CD4-positive, alpha-beta memory T cell (primary cell): ENCODE measurements at regions of chrX and their contacts with region 1.

Region 1: DNA sequence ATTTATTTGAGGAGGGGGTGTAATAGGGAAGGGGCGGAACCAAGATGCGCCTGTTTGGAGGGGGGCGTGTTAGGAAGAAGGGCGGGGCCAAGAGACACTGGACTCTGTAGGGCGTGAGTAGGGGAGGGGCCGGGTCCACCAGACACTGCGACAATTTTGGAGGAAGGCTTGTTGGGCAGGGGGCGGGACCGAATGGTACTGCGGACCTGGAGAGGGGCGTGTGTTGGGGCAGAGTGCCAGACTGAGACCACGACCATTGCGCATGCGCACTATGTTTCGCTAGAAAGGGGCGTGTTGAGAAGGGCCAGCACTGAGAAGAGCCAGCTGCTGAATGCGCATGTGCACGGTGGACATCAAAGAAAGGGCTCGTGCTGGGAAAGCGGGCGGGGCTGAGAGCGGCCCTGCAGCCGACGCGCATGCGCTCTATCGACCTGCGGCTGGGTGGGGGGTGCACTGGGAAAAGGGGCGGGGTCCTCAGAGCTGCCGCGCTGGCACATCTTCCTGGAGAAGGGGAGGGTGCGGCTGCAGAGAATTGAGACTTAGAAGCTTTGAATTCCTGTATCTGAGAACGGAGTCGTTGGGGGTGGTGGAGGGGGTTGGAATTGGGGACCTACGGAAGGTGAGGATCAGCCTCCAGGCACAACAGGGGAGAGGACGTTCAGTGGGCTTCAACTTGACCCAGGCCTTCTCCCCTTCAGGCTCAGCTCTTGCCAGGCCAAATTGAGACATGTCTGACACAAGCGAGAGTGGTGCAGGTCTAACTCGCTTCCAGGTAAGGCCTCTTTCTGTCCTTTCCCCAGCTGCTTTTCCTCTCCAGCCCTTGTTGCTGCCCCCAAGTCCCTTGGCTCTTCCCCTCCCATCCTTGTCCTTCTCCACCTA is 1.3 kb downstream of the MAGED2 start:
- DNase-seq: peak; percentile 85 to 92 (median 90)
- H3K4me3 ChIP-seq: peak overlapping the region; percentile 65 to 86
- H3K4me3 Mint-ChIP-seq: peak overlapping the region; percentile 87 to 96 (median 95)
- H3K27ac ChIP-seq: peak overlapping the region; percentile 80
- H3K27ac Mint-ChIP-seq: peak overlapping the region; percentile 96 to 99 (median 98)
- H3K4me1 ChIP-seq: peaks cover 15% of the 10 kb centered on the region
- H3K4me1 Mint-ChIP-seq: peaks cover 10 to 28% (median 12%) of the 10 kb centered on the region in 4 donors
- H3K27me3 ChIP-seq: no peaks in the 10 kb centered on the region
- H3K27me3 Mint-ChIP-seq: no peaks in the 10 kb centered on the region

Region 2: GRCh38 chrX:53224860-53225797 is 1583.7 kb before region 1 on chrX and contains the start of gene KDM5C:
- CTCF ChIA-PET with region 1: no interaction called
- POLR2A ChIA-PET with region 1: no interaction called
- intact Hi-C with region 1: loop called (anchors 10 kb)
- DNase-seq: peak; percentile 90 to 96 (median 96)
- H3K4me3 ChIP-seq: peak within 1 kb of the TSS; percentile 65 to 88
- H3K4me3 Mint-ChIP-seq: peak within 1 kb of the TSS; percentile 97 to 100 (median 99)
- H3K27ac ChIP-seq: peak within 1 kb of the TSS; percentile 97
- H3K27ac Mint-ChIP-seq: peak within 1 kb of the TSS; percentile 98 to 100 (median 99)
- H3K4me1 ChIP-seq: peaks cover 35% of the 10 kb centered on the region
- H3K4me1 Mint-ChIP-seq: peaks cover 24 to 52% (median 39%) of the 10 kb centered on the region in 4 donors
- H3K27me3 ChIP-seq: no peaks in the 10 kb centered on the region
- H3K27me3 Mint-ChIP-seq: peaks cover 0 to 2% of the 10 kb centered on the region in 2 donors
- total RNA-seq, gene KDM5C: 120 to 127 TPM

Region 3: GRCh38 chrX:54044126-54044876 is 764.5 kb before region 1 on chrX and contains the start of gene PHF8:
- CTCF ChIA-PET with region 1: no interaction called
- POLR2A ChIA-PET with region 1: interaction called, 9 read pairs
- intact Hi-C with region 1: loop called (anchors 2 kb)
- DNase-seq: peak; percentile 91 to 96 (median 96)
- H3K4me3 ChIP-seq: peak within 1 kb of the TSS; percentile 34 to 69
- H3K4me3 Mint-ChIP-seq: peak within 1 kb of the TSS; percentile 91 to 97 (median 94)
- H3K27ac ChIP-seq: peak within 1 kb of the TSS; percentile 90
- H3K27ac Mint-ChIP-seq: peak within 1 kb of the TSS; percentile 96 to 99 (median 97)
- H3K4me1 ChIP-seq: peaks cover 9% of the 10 kb centered on the region
- H3K4me1 Mint-ChIP-seq: peaks cover 10 to 41% (median 15%) of the 10 kb centered on the region in 4 donors
- H3K27me3 ChIP-seq: no peaks in the 10 kb centered on the region
- H3K27me3 Mint-ChIP-seq: no peaks in the 10 kb centered on the region
- total RNA-seq, gene PHF8: 65.1 to 67.2 TPM

Region 4: GRCh38 chrX:54439967-54440871 is 368.6 kb before region 1 on chrX and contains the start of gene TSR2:
- CTCF ChIA-PET with region 1: no interaction called
- POLR2A ChIA-PET with region 1: interaction called, 3 read pairs
- intact Hi-C with region 1: loop called (anchors 10 kb)
- DNase-seq: peak; percentile 76 to 88 (median 80)
- H3K4me3 ChIP-seq: peak within 1 kb of the TSS; percentile 69 to 81
- H3K4me3 Mint-ChIP-seq: peak within 1 kb of the TSS; percentile 86 to 97 (median 93)
- H3K27ac ChIP-seq: peak within 1 kb of the TSS; percentile 75
- H3K27ac Mint-ChIP-seq: peak within 1 kb of the TSS; percentile 84 to 92 (median 90)
- H3K4me1 ChIP-seq: peaks cover 26% of the 10 kb centered on the region
- H3K4me1 Mint-ChIP-seq: peaks cover 15 to 35% (median 25%) of the 10 kb centered on the region in 4 donors
- H3K27me3 ChIP-seq: no peaks in the 10 kb centered on the region
- H3K27me3 Mint-ChIP-seq: no peaks in the 10 kb centered on the region
- total RNA-seq, gene TSR2: 39.2 to 42.1 TPM

Region 5: DNA sequence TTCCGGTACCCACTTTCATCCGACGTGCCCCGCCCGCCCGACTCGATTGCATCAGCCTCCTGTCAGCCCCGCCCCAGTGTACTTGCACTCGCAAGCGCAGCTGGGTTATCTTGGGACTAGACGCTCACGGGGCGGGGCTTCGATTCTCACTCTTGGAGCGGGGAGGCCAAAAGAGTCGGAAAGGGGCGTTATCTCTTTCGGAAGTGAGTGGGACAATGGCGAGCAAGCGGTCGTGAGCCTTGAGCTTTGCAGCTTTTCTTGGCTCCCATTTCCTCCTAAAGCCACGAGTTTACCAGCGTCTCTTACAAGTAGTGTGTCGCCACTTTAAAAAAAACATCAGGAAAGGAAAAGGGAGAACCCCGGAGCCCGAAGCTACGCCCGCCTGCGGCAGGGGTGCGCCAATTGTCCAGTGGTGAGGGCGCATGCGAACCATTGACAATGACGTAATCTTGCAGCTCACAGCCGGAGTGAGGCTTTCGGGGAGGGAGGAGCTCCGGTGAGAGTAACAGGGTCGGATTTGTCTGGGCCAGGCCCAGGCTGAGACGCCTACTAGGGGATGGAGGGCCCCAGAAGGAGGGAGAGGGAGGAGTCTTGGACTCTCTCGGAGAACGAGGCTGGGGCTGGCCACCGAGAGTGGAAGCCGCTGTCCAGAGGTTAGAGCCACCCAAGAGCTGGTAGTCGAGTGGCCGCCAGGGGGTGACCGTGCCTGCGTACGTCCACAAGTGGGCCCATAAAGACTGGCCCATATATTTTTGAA is 169.3 kb before region 1 on chrX:
- CTCF ChIA-PET with region 1: interaction called, 5 read pairs
- POLR2A ChIA-PET with region 1: interaction called, 38 read pairs
- intact Hi-C with region 1: loop called (anchors 1 kb)
- DNase-seq: peak; percentile 86 to 97 (median 91)
- H3K4me3 ChIP-seq: peak overlapping the region; percentile 57 to 59
- H3K4me3 Mint-ChIP-seq: peak overlapping the region; percentile 89 to 96 (median 94)
- H3K27ac ChIP-seq: peak overlapping the region; percentile 94
- H3K27ac Mint-ChIP-seq: peak overlapping the region; percentile 98 to 100 (median 99)
- H3K4me1 ChIP-seq: peaks cover 12% of the 10 kb centered on the region
- H3K4me1 Mint-ChIP-seq: peaks cover 2 to 23% (median 9%) of the 10 kb centered on the region in 4 donors
- H3K27me3 ChIP-seq: no peaks in the 10 kb centered on the region
- H3K27me3 Mint-ChIP-seq: no peaks in the 10 kb centered on the region

Region 6: DNA sequence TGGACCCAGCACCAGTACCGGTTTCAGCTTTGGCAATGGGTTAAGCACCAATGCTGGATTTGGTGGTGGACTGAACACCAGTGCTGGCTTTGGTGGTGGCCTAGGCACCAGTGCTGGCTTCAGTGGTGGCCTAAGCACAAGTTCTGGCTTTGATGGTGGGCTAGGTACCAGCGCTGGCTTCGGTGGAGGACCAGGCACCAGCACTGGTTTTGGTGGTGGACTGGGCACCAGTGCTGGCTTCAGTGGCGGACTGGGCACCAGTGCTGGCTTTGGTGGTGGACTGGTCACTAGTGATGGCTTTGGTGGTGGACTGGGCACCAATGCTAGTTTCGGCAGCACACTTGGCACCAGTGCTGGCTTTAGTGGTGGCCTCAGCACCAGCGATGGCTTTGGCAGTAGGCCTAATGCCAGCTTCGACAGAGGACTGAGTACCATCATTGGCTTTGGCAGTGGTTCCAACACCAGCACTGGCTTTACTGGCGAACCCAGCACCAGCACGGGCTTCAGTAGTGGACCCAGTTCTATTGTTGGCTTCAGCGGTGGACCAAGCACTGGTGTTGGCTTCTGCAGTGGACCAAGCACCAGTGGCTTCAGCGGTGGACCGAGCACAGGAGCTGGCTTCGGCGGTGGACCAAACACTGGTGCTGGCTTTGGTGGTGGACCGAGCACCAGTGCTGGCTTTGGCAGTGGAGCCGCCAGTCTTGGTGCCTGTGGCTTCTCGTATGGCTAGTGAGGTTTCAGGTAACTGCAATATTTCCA is 121.6 kb after region 1 on chrX:
- CTCF ChIA-PET with region 1: no interaction called
- POLR2A ChIA-PET with region 1: no interaction called
- intact Hi-C with region 1: no loop called
- DNase-seq: no peak
- H3K4me3 ChIP-seq: no peak overlapping the region
- H3K4me3 Mint-ChIP-seq: no peak overlapping the region
- H3K27ac ChIP-seq: no peak overlapping the region
- H3K27ac Mint-ChIP-seq: no peak overlapping the region
- H3K4me1 ChIP-seq: no peaks in the 10 kb centered on the region
- H3K4me1 Mint-ChIP-seq: no peaks in the 10 kb centered on the region
- H3K27me3 ChIP-seq: no peaks in the 10 kb centered on the region
- H3K27me3 Mint-ChIP-seq: no peaks in the 10 kb centered on the region

Region 7: DNA sequence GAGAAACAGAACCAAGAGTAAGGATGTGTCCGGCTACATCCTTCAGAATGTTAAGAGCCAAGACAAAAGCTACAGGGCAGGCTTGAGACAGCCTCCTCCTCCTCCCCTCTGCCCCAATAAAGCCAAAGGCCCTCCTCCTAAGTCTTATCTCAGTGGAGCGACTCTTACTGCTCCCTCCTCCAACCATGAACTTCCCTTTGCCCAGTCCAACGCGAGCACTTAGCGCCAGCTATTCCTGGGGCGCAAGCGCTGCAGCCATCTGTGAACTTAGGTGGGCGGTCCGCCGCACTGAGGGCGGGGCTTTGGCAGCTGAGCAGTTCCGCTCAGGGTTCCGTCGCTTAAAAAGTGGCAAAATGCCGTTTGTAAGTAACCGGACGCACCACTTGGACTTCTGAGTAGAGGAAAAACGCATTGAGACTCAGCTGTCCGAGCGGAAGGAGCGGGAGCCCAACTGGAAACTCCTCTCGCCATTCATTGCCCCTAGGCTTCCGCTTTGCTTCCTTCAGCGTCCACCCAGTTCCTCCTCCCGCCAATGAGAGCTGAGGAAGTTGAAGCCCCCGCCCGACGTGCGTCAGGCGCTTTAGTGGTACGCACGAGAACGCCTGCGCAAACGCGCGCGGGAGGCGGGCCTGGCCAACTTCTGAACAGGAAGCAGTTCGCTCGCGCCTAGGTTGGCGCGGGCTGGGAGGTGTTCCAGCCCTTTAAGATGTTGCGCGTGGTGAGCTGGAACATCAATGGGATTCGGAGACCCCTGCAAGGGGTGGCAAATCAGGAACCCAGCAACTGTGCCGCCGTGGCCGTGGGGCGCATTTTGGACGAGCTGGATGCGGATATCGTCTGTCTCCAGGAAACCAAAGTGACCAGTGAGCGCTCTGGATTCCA is 191.1 kb after region 1 on chrX and contains the start of gene APEX2:
- CTCF ChIA-PET with region 1: no interaction called
- POLR2A ChIA-PET with region 1: interaction called, 6 read pairs
- intact Hi-C with region 1: loop called (anchors 1 kb)
- DNase-seq: peak; percentile 83 to 91 (median 86)
- H3K4me3 ChIP-seq: peak within 1 kb of the TSS; percentile 63 to 84
- H3K4me3 Mint-ChIP-seq: peak within 1 kb of the TSS; percentile 94 to 97 (median 96)
- H3K27ac ChIP-seq: peak within 1 kb of the TSS; percentile 91
- H3K27ac Mint-ChIP-seq: peak within 1 kb of the TSS; percentile 92 to 99 (median 97)
- H3K4me1 ChIP-seq: peaks cover 17% of the 10 kb centered on the region
- H3K4me1 Mint-ChIP-seq: peaks cover 8 to 29% (median 15%) of the 10 kb centered on the region in 4 donors
- H3K27me3 ChIP-seq: no peaks in the 10 kb centered on the region
- H3K27me3 Mint-ChIP-seq: no peaks in the 10 kb centered on the region
- total RNA-seq, gene APEX2: 13.4 TPM

Region 8: DNA sequence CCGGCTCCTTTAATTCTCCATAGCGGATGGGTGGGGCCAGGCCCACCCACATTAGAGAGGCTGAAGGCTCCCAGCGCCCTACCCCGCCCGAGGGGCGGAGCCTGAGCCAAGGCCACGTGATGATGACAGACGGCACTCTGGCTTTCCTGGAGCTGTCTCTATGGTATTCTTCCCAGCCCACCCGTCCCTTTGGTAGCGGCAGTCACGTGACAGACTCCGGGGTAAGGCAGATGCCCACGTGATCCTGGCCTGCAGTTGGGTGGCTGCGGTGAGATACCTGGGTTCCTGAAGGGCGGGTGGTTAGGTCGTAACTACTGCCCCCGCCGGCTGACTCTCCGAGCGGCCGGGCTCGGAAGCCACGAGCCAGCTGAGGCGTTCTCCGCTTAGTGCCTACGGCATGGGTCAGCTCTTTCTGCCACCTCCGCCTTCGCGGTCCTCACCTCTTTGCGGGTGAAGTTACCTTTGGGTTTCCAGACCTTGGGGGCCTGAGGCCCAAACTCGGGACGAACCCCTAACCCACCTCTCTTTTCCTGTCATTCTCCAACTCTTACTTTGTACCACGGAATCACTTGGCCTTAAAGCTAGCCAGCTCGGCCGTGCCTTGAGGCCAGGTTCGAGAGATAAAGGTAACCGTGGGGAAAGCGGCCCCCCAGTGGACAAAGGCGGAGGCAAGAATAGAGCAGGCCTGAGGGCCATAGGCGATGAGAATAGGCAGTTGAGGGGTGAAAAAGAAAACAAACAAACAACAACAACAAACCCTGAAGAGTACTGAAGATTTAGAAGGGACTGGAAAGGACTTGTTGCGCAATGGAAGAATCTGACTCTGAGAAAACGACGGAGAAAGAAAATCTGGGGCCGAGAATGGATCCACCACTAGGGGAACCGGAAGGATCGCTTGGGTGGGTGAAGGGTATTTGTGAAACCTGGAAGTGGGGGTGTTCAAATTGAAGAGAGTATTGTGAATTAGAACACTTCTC is 909.0 kb after region 1 on chrX and contains the start of gene RRAGB:
- CTCF ChIA-PET with region 1: no interaction called
- POLR2A ChIA-PET with region 1: no interaction called
- intact Hi-C with region 1: loop called (anchors 5 kb)
- DNase-seq: peak; percentile 86 to 95 (median 90)
- H3K4me3 ChIP-seq: peak within 1 kb of the TSS; percentile 61 to 76
- H3K4me3 Mint-ChIP-seq: peak within 1 kb of the TSS; percentile 72 to 92 (median 86)
- H3K27ac ChIP-seq: peak within 1 kb of the TSS; percentile 80
- H3K27ac Mint-ChIP-seq: peak within 1 kb of the TSS; percentile 65 to 98 (median 94)
- H3K4me1 ChIP-seq: peaks cover 32% of the 10 kb centered on the region
- H3K4me1 Mint-ChIP-seq: peaks cover 18 to 44% (median 20%) of the 10 kb centered on the region in 4 donors
- H3K27me3 ChIP-seq: no peaks in the 10 kb centered on the region
- H3K27me3 Mint-ChIP-seq: no peaks in the 10 kb centered on the region
- total RNA-seq, gene RRAGB: 9.8 to 13.1 TPM

Region 9: GRCh38 chrX:55981603-55982002 is 1172.8 kb after region 1 on chrX:
- CTCF ChIA-PET with region 1: no interaction called
- POLR2A ChIA-PET with region 1: no interaction called
- intact Hi-C with region 1: no loop called
- DNase-seq: no peak
- H3K4me3 ChIP-seq: no peak overlapping the region
- H3K4me3 Mint-ChIP-seq: no peak overlapping the region
- H3K27ac ChIP-seq: no peak overlapping the region
- H3K27ac Mint-ChIP-seq: no peak overlapping the region
- H3K4me1 ChIP-seq: no peaks in the 10 kb centered on the region
- H3K4me1 Mint-ChIP-seq: peaks cover 0 to 3% (median under 1%) of the 10 kb centered on the region in 4 donors
- H3K27me3 ChIP-seq: no peaks in the 10 kb centered on the region
- H3K27me3 Mint-ChIP-seq: no peaks in the 10 kb centered on the region